HEK293T (cell line): ENCODE measurements at regions of chr6 and their contacts with region 1.

Region 1: DNA sequence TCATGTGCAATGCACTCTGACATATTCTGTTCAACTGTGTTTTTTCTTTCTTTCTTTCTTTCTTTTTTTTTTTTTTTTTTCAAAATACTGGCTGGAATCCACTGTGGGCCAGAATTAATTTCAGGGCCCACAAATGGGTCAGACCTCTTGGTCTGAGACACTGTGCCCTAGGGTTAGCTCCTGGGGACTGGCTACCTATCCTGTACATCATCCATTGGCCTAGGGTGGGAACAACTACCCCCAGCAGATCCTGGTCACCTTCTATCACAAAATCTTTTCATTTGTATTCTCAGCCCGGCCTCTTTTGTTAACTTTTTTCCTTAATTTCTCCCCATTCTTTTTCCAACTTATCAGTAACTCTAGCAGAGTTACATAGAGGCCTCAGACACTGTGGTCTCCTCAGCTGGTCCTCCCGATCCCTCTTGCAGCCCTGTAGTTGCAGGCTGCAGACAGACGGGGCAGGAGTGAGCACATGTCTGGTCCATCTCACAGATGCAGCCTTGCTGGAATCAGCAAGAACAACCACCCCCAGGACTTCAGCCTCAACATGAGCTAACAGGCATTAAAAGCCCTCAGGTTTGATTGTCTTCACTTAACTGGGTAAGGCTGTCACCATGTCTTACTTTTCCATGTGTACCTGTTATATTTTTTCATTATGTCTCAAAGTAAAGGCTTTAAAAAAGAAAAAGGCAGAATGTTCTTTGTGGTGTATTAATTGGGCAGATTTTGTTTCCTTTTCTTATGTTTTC is 41.3 kb downstream of the TXLNB start:
- DNase-seq: peak; percentile 88

Region 2: DNA sequence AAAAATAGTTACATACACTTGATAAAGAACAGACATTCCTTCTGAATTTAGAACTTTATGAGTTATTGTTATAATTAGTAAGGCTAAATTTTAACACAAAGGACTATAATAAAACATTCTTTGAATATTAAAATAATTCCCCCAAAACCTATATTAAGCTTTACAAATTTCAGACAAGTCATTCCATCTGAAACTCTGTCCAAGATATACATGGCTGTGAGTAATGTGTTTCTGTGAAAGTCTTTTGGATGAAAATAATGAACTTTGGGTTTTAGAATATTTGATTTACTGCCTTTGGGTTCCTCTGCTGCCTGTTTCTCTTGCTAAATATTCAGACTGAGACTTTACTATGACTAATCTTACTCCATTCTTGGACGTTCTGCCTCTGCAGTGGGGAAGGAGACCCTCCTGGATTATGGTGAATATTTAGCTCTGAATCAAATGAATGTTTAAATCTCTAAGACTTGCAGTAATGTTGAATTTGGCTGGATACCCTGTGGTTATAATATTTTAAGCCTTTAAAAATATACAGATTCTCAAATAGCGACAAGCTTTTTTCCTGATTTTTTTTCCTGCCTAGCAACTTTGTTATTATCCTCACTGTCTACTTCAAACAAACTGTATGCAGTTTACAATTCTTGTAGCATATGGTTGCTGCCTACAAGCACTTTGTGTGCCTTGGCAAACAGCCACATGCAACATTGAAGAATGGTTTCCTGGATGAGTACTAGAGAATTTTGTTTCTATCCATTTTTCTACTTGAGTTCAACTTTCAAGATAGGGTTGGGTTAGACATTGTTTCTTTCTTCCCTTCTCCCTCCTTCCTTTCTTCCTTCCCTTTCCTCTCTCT is 10.1 kb before region 1 on chr6:
- CTCF ChIA-PET with region 1: interaction called, 11 read pairs
- POLR2A ChIA-PET with region 1: no interaction called
- DNase-seq: no peak

Region 3: GRCh38 chr6:139296927-139297326 is 46.5 kb after region 1 on chr6:
- CTCF ChIA-PET with region 1: no interaction called
- POLR2A ChIA-PET with region 1: no interaction called
- DNase-seq: no peak